ENCODE measurements at regions of chr10 and their contacts with region 1.

Region 1: GRCh38 chr10:119070395-119071165 is 10.0 kb downstream of the EIF3A start:
- DNase-seq: no peak
- ATAC-seq: no peak
- H3K4me3 Mint-ChIP-seq: no peak overlapping the region
- H3K27ac Mint-ChIP-seq: peak overlapping the region; percentile 70
- H3K4me1 Mint-ChIP-seq: peaks cover 24% of the 10 kb centered on the region
- H3K27me3 Mint-ChIP-seq: no peaks in the 10 kb centered on the region
- CTCF ChIP-seq: no peak

Region 2: GRCh38 chr10:118950190-118950680 is 120.3 kb before region 1 on chr10:
- CTCF ChIA-PET with region 1: no interaction called
- POLR2A ChIA-PET with region 1: no interaction called
- intact Hi-C with region 1: no loop called
- DNase-seq: no peak
- ATAC-seq: peak; percentile 58
- H3K4me3 Mint-ChIP-seq: no peak overlapping the region
- H3K27ac Mint-ChIP-seq: no peak overlapping the region
- H3K4me1 Mint-ChIP-seq: no peaks in the 10 kb centered on the region
- H3K27me3 Mint-ChIP-seq: peaks cover 6% of the 10 kb centered on the region
- CTCF ChIP-seq: no peak

Region 3: GRCh38 chr10:118983263-118983662 is 87.3 kb before region 1 on chr10:
- CTCF ChIA-PET with region 1: no interaction called
- POLR2A ChIA-PET with region 1: no interaction called
- intact Hi-C with region 1: no loop called
- DNase-seq: no peak
- ATAC-seq: no peak
- H3K4me3 Mint-ChIP-seq: no peak overlapping the region
- H3K27ac Mint-ChIP-seq: no peak overlapping the region
- H3K4me1 Mint-ChIP-seq: peaks cover 14% of the 10 kb centered on the region
- H3K27me3 Mint-ChIP-seq: no peaks in the 10 kb centered on the region
- CTCF ChIP-seq: no peak

Region 4: GRCh38 chr10:119058010-119058409 is 12.6 kb before region 1 on chr10:
- CTCF ChIA-PET with region 1: interaction called, 3 read pairs
- POLR2A ChIA-PET with region 1: interaction called, 10 read pairs
- intact Hi-C with region 1: no loop called
- DNase-seq: no peak
- ATAC-seq: no peak
- H3K4me3 Mint-ChIP-seq: no peak overlapping the region
- H3K27ac Mint-ChIP-seq: no peak overlapping the region
- H3K4me1 Mint-ChIP-seq: peaks cover 14% of the 10 kb centered on the region
- H3K27me3 Mint-ChIP-seq: no peaks in the 10 kb centered on the region
- CTCF ChIP-seq: no peak

Region 5: GRCh38 chr10:119263951-119264621 is 193.5 kb after region 1 on chr10:
- CTCF ChIA-PET with region 1: no interaction called
- POLR2A ChIA-PET with region 1: no interaction called
- intact Hi-C with region 1: no loop called
- DNase-seq: no peak
- ATAC-seq: no peak
- H3K4me3 Mint-ChIP-seq: no peak overlapping the region
- H3K27ac Mint-ChIP-seq: no peak overlapping the region
- H3K4me1 Mint-ChIP-seq: peaks cover 15% of the 10 kb centered on the region
- H3K27me3 Mint-ChIP-seq: no peaks in the 10 kb centered on the region
- CTCF ChIP-seq: no peak